Pancreas (tissue), 10 donors: ENCODE measurements at regions of chr1 and their contacts with region 1.

Region 1: GRCh38 chr1:205591522-205592351 is 40.1 kb downstream of the ELK4 start:
- DNase-seq: peak; percentile 76 to 97 (median 88)
- ATAC-seq: peak; percentile 95 to 98 (median 96)
- H3K4me3 ChIP-seq: peak overlapping the region in 2 of 4 donors; percentile 22 to 43
- H3K27ac ChIP-seq: peak overlapping the region in 3 of 4 donors; percentile 3 to 64 (median 50)
- H3K4me1 ChIP-seq: no peaks in the 10 kb centered on the region
- H3K27me3 ChIP-seq: no peaks in the 10 kb centered on the region
- CTCF ChIP-seq: peak; percentile 92 to 97 (median 94)

Region 2: GRCh38 chr1:205335643-205336091 is 256.1 kb before region 1 on chr1:
- intact Hi-C with region 1: no loop called
- DNase-seq: peak; percentile 84 to 94 (median 90)
- ATAC-seq: peak; percentile 93 to 100 (median 98)
- H3K4me3 ChIP-seq: no peak overlapping the region
- H3K27ac ChIP-seq: no peak overlapping the region
- H3K4me1 ChIP-seq: no peaks in the 10 kb centered on the region
- H3K27me3 ChIP-seq: no peaks in the 10 kb centered on the region
- CTCF ChIP-seq: peak; percentile 90 to 98 (median 94)

Region 3: GRCh38 chr1:205536759-205537361 is 54.9 kb before region 1 on chr1:
- intact Hi-C with region 1: loop called in 1 of 3 experiments (anchors 10 kb)
- DNase-seq: peak in 5 of 6 donors; percentile 46 to 75 (median 64)
- ATAC-seq: peak; percentile 76 to 95 (median 86)
- H3K4me3 ChIP-seq: no peak overlapping the region
- H3K27ac ChIP-seq: no peak overlapping the region
- H3K4me1 ChIP-seq: no peaks in the 10 kb centered on the region
- H3K27me3 ChIP-seq: no peaks in the 10 kb centered on the region
- CTCF ChIP-seq: no peak

Region 4: DNA sequence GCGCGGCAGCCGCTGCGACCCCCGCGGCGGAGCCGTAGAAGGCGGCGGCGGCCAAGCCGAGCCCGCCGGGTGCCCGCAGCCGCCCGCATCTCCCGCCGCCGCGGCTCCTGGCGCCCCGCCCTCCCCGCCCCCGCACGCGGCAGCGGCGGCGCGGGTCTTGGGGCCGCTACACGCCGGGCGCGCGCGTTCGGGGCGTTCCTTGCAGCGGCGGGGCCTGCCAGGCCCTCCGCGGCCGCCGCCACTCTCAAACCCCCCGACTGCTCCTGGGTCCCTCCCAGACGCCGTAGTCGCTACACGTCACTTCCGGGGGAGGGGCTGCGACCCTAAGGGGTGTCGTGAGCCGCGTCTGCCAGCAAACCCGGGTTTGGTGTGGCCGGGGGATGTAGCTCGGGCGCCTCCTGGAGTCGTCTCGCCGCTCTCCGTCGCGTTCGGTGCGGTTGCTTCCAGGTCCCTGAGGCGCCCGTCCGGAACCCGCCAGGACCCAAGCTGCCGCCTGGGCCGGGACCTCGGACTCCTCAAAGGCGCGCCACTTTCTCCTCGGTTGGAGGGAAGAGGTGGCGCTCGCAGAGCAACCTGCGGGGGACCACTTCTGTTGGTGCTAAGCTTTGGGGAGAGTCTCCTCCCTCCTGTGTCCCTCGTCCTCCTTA is 40.1 kb after region 1 on chr1 and contains the start of gene ELK4:
- intact Hi-C with region 1: loop called in 1 of 3 experiments (anchors 5 kb)
- DNase-seq: peak; percentile 99 to 100 (median 99)
- ATAC-seq: peak; percentile 94 to 97 (median 96)
- H3K4me3 ChIP-seq: peak within 1 kb of the TSS; percentile 45 to 70 (median 65)
- H3K27ac ChIP-seq: peak within 1 kb of the TSS; percentile 81 to 96 (median 94)
- H3K4me1 ChIP-seq: peaks cover 5 to 18% (median 18%) of the 10 kb centered on the region in 3 donors
- H3K27me3 ChIP-seq: no peaks in the 10 kb centered on the region
- CTCF ChIP-seq: peak; percentile 37 to 66 (median 60)
- total RNA-seq, gene ELK4: 18.5 to 42.7 (median 26.6) TPM

Region 5: DNA sequence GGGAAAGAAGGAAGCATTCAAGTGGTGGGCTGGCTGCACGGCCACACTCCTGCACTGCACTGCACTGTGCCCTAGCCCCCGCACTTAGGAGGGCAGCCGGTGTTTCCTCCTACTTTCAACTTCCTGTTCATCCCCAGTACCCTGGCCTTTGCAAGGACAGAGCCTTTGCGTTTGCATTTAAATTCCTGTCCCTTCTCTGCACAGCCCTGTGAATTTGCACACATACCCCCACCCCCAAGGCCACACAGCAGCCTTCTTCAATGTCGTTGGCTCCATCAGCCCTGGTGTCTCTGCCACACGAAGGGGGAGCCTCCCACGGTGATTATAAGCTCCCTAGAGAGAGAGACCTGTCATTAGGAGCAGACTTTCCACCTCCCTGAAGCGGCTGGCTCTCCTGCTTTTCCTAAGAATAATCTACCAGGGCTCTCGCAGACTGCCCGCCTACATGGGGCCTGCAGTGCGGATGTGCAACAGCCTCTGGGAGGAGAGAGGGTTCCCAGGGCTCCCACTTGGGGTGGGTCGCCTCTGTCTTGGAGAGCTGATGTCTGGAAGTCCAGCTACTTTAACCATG is 101.8 kb after region 1 on chr1:
- intact Hi-C with region 1: no loop called
- DNase-seq: no peak
- ATAC-seq: no peak
- H3K4me3 ChIP-seq: no peak overlapping the region
- H3K27ac ChIP-seq: no peak overlapping the region
- H3K4me1 ChIP-seq: no peaks in the 10 kb centered on the region
- H3K27me3 ChIP-seq: no peaks in the 10 kb centered on the region
- CTCF ChIP-seq: no peak